CD8-positive, alpha-beta T cell (primary cell): ENCODE measurements at regions of chr18 and their contacts with region 1.

Region 1: DNA sequence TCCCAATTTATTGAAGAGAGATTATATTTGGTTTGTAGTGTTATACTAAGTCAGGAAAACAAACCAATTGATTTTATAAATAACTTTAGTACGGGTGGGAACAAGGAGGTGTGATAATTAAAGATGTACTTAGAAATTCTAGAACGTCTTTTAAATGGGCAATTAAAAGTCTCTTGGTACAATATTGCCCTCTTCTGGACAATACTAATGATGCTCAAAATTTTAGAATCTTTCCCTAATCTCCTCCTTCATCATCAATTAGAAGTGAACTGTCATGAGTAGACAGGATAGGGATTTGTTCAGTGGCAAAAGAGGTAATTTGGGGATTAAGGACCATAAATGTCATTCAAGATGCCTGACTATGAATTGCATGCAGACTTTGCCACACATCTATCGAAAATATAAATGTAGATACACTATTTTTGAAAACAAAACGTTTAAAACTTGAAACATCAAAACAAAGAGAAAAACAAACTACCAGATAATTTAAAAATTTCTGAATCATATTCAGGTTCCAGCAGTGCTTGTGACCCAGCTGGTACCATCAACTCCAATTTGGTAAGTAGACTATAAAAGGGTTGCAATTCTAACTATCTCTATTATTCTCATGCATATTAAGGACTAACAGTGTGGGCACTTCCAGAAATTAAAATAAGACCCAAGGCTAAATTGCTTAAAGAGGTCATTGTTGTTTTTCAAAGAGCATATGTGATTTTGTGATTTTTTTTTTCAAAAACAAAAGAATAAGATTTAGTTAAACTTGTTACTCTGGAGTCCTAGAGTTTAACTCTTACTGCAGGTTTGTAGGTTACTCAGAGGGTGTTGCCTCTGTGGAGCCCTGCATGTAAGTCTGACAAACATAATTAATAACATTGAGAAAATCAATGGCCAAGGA is 123.5 kb downstream of the LAMA3 start:
- DNase-seq: peak in 2 of 9 experiments; percentile 45 to 59
- ATAC-seq: no peak
- H3K4me3 ChIP-seq: no peak overlapping the region
- H3K4me3 Mint-ChIP-seq: no peak overlapping the region
- H3K27ac ChIP-seq: no peak overlapping the region
- H3K27ac Mint-ChIP-seq: no peak overlapping the region
- H3K4me1 ChIP-seq: peaks cover 19% of the 10 kb centered on the region
- H3K4me1 Mint-ChIP-seq: peaks cover 30% of the 10 kb centered on the region
- H3K27me3 ChIP-seq: no peaks in the 10 kb centered on the region
- H3K27me3 Mint-ChIP-seq: no peaks in the 10 kb centered on the region
- CTCF ChIP-seq: peak; percentile 67

Region 2: GRCh38 chr18:23515911-23516546 is 296.8 kb before region 1 on chr18:
- CTCF ChIA-PET with region 1: interaction called, 3 read pairs
- POLR2A ChIA-PET with region 1: no interaction called
- intact Hi-C with region 1: loop called (anchors 5 kb)
- DNase-seq: peak; percentile 49 to 87 (median 76)
- ATAC-seq: peak; percentile 99
- H3K4me3 ChIP-seq: no peak overlapping the region
- H3K4me3 Mint-ChIP-seq: no peak overlapping the region
- H3K27ac ChIP-seq: peak overlapping the region in 1 of 2 experiments; percentile 20
- H3K27ac Mint-ChIP-seq: peak overlapping the region; percentile 70
- H3K4me1 ChIP-seq: no peaks in the 10 kb centered on the region
- H3K4me1 Mint-ChIP-seq: peaks cover 15% of the 10 kb centered on the region
- H3K27me3 ChIP-seq: no peaks in the 10 kb centered on the region
- H3K27me3 Mint-ChIP-seq: no peaks in the 10 kb centered on the region
- CTCF ChIP-seq: peak; percentile 86

Region 3: GRCh38 chr18:23612435-23613085 is 200.2 kb before region 1 on chr18:
- CTCF ChIA-PET with region 1: interaction called, 11 read pairs
- POLR2A ChIA-PET with region 1: no interaction called
- intact Hi-C with region 1: no loop called
- DNase-seq: no peak
- ATAC-seq: no peak
- H3K4me3 ChIP-seq: no peak overlapping the region
- H3K4me3 Mint-ChIP-seq: no peak overlapping the region
- H3K27ac ChIP-seq: no peak overlapping the region
- H3K27ac Mint-ChIP-seq: no peak overlapping the region
- H3K4me1 ChIP-seq: no peaks in the 10 kb centered on the region
- H3K4me1 Mint-ChIP-seq: no peaks in the 10 kb centered on the region
- H3K27me3 ChIP-seq: no peaks in the 10 kb centered on the region
- H3K27me3 Mint-ChIP-seq: peaks cover 7% of the 10 kb centered on the region
- CTCF ChIP-seq: no peak

Region 4: GRCh38 chr18:23619388-23619881 is 193.4 kb before region 1 on chr18:
- CTCF ChIA-PET with region 1: interaction called, 62 read pairs
- POLR2A ChIA-PET with region 1: no interaction called
- intact Hi-C with region 1: loop called (anchors 1 kb)
- DNase-seq: peak in 2 of 9 experiments; percentile 27 to 47
- ATAC-seq: peak; percentile 36
- H3K4me3 ChIP-seq: peak overlapping the region; percentile 19 to 26
- H3K4me3 Mint-ChIP-seq: peak overlapping the region; percentile 72
- H3K27ac ChIP-seq: no peak overlapping the region
- H3K27ac Mint-ChIP-seq: no peak overlapping the region
- H3K4me1 ChIP-seq: no peaks in the 10 kb centered on the region
- H3K4me1 Mint-ChIP-seq: peaks cover 11% of the 10 kb centered on the region
- H3K27me3 ChIP-seq: peaks cover 11 to 15% of the 10 kb centered on the region in 2 experiments
- H3K27me3 Mint-ChIP-seq: peaks cover 39% of the 10 kb centered on the region
- CTCF ChIP-seq: no peak